Left cardiac atrium (tissue), 4 donors: ENCODE measurements at regions of chr6 and their contacts with region 1.

Region 1: DNA sequence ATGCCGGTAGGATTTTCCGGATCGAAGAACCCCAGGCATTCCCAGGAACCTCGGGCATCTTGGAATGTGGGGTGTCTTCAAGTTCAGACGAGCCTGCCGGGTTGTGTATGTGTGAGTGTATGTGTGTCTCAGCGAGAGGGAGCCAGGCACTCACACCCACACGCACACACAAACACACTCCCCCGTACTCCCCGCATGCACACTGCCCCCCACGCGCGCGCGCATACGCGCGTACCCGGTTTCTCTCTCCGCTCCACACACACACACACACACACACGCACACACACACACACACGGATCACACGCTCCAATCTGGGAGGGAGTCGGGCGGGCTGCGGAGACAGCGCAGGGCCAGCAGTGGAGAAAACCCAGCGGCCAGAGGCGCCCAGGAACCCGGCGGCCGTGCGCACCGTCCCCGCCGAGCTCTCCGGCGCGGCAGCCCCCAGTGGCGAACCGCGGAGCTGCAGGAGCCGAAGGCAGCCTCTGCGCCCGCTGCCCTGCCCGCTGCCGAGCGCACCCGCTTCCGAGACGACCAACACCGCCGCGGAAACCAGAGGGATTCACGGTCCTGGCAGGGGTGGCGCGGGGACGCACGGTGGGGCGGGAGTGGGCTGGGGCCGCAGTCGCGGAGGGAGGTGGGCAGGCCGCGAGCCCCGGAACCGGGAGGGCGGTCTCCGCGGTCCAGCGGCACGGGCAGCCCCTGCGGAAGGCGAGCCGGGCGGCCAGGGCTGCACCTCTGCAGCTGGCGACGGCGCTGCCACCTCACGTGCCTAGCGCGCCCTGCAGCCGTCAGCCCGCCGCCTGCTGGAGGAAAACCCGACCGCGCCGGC is at the start of gene LRFN2:
- DNase-seq: peak; percentile 66
- ATAC-seq: peak; percentile 95 to 96
- total RNA-seq, gene LRFN2: not detected

Region 2: DNA sequence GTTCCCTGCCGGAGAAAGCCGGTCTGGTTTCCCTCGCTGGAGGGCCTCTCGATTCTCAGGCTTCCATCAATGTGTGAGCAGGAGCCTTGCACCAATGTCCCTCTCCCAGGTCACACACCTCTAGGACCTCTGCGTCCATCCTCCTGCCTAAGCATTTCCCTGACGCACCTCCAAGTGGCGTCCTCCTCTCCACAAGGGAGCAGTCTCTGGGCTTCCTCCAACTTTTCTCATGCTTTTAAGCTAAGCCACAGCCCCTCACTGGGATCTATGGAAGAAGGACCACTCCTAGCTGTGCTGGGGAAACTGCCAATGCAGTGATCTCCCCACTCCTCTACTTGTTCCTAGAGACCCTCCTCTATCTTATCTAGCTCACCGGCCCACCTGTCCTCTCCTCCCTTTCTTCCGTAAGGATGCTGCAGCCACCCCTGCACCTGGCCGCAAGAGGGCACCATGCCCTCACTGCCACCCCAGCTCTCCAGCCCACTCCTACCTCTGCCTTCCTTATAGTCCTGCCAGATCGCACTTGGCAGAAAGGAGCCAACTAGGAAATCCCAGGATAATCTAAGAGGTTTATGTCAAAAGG is 259.0 kb before region 1 on chr6:
- intact Hi-C with region 1: loop called (anchors 10 kb)
- DNase-seq: no peak
- ATAC-seq: peak in 1 of 2 donors; percentile 32

Region 3: DNA sequence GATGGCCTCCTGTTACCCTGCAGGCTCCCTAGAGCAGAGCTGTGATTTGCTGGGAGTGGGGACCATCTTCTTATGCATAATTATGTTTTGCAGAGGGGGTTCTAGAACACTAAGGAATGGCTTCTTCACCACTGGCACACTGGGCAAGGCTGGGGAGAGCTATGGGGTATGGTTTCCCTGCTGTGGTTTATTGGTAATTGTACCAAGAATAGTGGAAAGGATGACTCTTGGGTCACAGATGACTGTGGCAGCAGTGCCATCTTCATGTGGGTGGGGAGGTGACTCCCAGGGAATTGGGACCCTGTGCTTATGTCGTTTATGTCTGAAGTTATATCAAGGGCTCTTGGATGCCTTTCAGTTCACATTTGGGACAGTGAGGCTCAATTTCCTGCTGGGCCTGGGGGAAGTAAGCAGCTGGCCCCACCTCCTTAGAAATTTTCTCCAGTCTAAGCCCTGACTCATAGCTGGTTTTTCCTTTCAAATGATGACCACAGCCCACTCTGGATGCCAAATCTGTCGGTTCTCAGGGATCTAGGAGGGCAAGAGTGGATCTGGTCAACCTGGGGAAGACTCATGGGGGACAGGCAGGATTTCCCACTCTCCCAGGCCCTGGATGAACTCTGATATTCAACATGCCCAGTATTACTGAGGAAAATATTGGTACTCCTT is 231.1 kb before region 1 on chr6:
- intact Hi-C with region 1: loop called in 1 of 2 experiments (anchors 10 kb)
- DNase-seq: no peak
- ATAC-seq: no peak

Region 4: GRCh38 chr6:40832691-40833090 is 245.2 kb after region 1 on chr6:
- intact Hi-C with region 1: no loop called
- DNase-seq: no peak
- ATAC-seq: no peak